Ovary (tissue), 10 donors: ENCODE measurements at regions of chr20 and their contacts with region 1.

Region 1: DNA sequence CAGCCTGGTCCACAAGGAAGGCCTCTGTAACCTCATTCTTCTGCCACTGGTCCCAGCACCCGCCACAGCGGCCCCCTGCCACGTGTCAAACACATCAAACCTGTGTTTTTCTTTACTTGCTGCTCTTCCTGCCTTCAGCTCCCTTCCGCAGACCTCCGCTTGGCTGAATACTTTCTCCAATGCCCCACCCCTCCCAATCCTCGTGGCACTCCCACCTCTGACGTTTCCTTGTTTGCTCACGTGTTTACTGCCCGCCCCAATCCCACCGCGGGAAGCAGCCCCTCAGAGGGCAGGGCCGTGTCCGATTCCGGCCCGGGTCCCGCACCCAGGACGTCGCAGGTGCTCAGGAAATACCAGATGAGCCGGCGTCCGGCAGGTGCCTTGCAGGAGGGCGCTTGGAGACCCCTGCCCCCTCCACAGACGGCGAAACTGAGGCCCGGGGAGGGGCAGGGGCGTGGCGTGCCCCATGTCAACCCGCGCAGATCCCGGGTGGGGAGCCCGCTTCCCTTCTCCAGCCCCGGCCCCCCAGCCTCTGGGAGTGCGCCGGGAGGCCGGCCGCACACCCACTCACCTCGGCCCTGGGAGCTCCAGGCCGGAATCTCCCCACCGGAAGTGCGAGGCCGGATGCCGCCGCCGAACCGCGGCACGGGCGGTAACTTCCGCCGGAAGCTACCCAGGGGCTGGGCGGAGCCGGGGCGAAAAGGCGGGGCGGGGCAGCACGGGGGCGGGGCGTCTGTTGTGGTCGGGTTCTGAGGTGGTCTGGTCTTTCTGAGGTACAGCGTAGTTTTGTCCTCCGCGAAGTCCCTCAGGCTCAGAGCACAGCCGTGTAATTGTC is 42.4 kb downstream of the ELMO2 start:
- DNase-seq: peak; percentile 85 to 92 (median 89)
- H3K4me3 ChIP-seq: peak overlapping the region; percentile 100
- H3K27ac ChIP-seq: peak overlapping the region; percentile 87
- H3K4me1 ChIP-seq: peaks cover 2% of the 10 kb centered on the region
- H3K27me3 ChIP-seq: no peaks in the 10 kb centered on the region
- CTCF ChIP-seq: no peak
- EP300 ChIP-seq: no peak
- POLR2A ChIP-seq: peak; percentile 91

Region 2: GRCh38 chr20:46396052-46396740 is 32.2 kb after region 1 on chr20:
- intact Hi-C with region 1: no loop called
- DNase-seq: no peak
- H3K4me3 ChIP-seq: no peak overlapping the region
- H3K27ac ChIP-seq: no peak overlapping the region
- H3K4me1 ChIP-seq: peaks cover 18% of the 10 kb centered on the region
- H3K27me3 ChIP-seq: no peaks in the 10 kb centered on the region
- CTCF ChIP-seq: no peak
- EP300 ChIP-seq: no peak
- POLR2A ChIP-seq: no peak

Region 3: DNA sequence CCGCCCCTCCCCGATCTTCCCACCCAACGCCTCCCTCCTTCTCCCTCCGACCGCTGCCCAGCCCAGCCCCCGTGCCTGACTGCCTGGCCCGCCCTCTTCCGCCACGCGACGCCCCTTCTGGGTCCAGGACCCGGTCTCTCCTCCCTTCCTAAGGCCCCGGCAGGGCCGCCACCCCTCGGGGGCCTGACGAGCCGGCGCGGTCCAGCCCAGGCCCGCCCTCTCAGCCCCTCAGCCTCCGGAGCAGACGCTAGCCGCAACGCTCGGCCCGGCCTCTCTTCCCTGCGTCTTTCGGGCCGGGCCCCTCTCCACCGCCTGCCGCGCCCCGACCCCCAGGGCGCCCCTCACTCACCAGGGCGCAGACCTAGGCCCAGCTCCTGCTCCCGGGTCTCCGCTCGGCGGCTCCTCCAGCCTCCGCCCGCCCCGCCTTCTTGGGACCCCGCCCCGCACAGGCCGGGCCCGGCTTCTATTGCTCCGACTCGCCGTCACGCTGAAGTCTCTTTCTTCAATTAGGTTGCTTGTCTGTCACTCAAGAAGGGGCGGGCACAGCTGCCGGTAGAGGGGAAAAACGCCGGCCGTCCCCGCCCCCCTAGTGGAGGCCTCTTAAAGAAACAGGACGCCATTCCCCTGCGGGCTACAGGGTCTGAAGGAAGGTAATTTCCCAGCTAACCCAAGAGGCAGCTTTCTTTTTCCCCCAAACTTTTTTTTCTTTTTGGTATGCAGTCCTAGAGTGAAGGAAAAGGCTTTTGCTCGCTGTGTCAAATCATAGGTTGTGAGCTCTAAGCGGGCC is 42.4 kb after region 1 on chr20 and contains the start of gene ELMO2:
- intact Hi-C with region 1: loop called in 1 of 4 experiments (anchors 1 kb)
- DNase-seq: peak; percentile 95 to 98 (median 96)
- H3K4me3 ChIP-seq: peak within 1 kb of the TSS; percentile 96
- H3K27ac ChIP-seq: peak within 1 kb of the TSS; percentile 80 to 82
- H3K4me1 ChIP-seq: peaks cover 16% of the 10 kb centered on the region
- H3K27me3 ChIP-seq: no peaks in the 10 kb centered on the region
- CTCF ChIP-seq: peak in 1 of 3 donors; percentile 11
- EP300 ChIP-seq: no peak
- POLR2A ChIP-seq: peak; percentile 59
- total RNA-seq, gene ELMO2: 20.1 to 51.7 (median 41.0) TPM

Region 4: GRCh38 chr20:46446851-46447250 is 82.8 kb after region 1 on chr20:
- intact Hi-C with region 1: no loop called
- DNase-seq: no peak
- H3K4me3 ChIP-seq: no peak overlapping the region
- H3K27ac ChIP-seq: no peak overlapping the region
- H3K4me1 ChIP-seq: no peaks in the 10 kb centered on the region
- H3K27me3 ChIP-seq: no peaks in the 10 kb centered on the region
- CTCF ChIP-seq: no peak
- EP300 ChIP-seq: no peak
- POLR2A ChIP-seq: no peak